ENCODE measurements at regions of chr10 and their contacts with region 1.

Region 1: GRCh38 chr10:122044045-122044661 is 55.2 kb downstream of the TACC2 start:
- DNase-seq: no peak
- ATAC-seq: peak; percentile 64

Region 2: GRCh38 chr10:121994390-121994961 is 49.7 kb before region 1 on chr10:
- intact Hi-C with region 1: loop called (anchors 2 kb)
- DNase-seq: no peak
- ATAC-seq: peak; percentile 79

Measured in Right ventricle myocardium inferior (tissue), 1 donor.